ENCODE measurements at regions of chr20 and their contacts with region 1.

Region 1: GRCh38 chr20:44683263-44684046 is 31.7 kb upstream of the CCN5 start:
- ATAC-seq: peak; percentile 47 to 90 (median 75)
- H3K4me3 ChIP-seq: no peak overlapping the region
- H3K27ac ChIP-seq: no peak overlapping the region
- H3K4me1 ChIP-seq: peaks cover 0 to 10% of the 10 kb centered on the region in 2 donors

Region 2: DNA sequence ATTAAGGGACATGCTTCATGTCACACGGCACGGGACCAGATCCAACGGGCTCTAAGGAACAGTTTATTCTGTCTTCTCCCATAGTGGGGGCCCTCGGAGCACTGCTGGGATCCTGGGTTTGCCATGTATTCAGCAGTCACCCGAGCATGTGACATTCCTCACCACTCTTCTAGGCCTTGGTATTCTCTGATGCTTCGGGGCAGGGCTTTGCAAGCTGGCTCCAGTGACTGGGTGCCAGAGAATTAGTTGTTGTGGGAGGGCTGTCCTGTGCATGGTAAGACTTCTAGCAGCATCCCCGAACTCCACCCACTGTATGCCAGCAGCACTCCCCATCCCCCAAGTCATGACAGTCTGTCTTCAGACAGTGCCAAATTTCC is 37.1 kb after region 1 on chr20:
- in situ Hi-C with region 1: loop called in 1 of 9 experiments (anchors 5 kb)
- ATAC-seq: peak; percentile 61 to 88 (median 67)
- H3K4me3 ChIP-seq: no peak overlapping the region
- H3K27ac ChIP-seq: no peak overlapping the region
- H3K4me1 ChIP-seq: no peaks in the 10 kb centered on the region

Region 3: GRCh38 chr20:44733341-44734069 is 50.0 kb after region 1 on chr20:
- in situ Hi-C with region 1: loop called in 3 of 9 experiments (anchors 10 kb)
- ATAC-seq: peak; percentile 27 to 62 (median 34)
- H3K4me3 ChIP-seq: no peak overlapping the region
- H3K27ac ChIP-seq: no peak overlapping the region
- H3K4me1 ChIP-seq: peaks cover 5 to 11% of the 10 kb centered on the region in 2 donors

Region 4: DNA sequence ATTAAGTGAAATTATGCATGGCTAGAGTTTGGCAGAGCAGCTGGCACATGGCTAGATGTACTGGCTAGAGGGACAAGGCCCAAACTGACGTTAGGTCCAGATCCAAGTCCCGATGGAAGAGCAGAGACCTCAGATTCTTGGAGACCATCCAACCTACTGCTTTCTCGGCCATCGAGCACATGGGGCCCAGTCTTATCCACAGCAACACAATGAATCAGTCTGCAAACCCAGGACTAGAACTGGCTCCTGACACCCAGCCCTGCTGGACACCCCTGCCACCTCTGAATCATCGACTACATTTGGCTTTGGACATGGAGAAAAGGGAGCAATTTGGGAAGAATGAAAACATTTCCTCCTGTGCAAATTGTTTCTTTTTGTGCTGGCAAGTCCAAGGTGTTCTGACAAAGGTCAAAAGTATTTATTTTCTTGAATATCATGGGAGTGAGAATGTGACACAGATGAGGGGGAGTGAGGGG is 178.1 kb after region 1 on chr20:
- in situ Hi-C with region 1: loop called in 7 of 9 experiments (anchors 10 to 25 kb)
- ATAC-seq: peak in 2 of 8 experiments; percentile 53 to 56
- H3K4me3 ChIP-seq: no peak overlapping the region
- H3K27ac ChIP-seq: no peak overlapping the region
- H3K4me1 ChIP-seq: peaks cover 16 to 17% of the 10 kb centered on the region in 2 donors

Measured in motor neuron (in vitro differentiated cells).